ENCODE measurements at regions of chr2 and their contacts with region 1.

Region 1: DNA sequence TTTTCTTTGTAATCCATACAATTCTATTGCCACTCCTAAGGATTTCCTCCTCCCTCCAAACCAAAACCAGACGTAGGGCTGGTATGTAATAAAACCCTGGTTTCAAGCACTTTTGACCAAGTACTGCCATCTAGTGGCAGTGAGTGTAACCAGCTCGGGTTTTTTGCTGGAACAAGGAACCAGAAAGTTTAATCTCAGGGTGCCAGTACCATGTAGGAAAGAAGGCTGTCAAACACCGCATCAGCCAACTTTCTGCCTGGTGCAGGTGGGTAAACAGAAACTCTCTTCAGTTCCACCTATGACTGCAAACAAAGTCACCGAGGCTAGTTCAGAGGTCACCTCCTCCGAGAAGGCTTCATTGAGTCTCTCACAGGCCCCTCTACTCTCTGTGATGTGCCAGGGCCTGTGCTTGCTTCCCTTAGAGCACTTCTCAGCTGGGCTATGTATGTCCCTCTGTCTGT is 10.2 kb upstream of the THNSL2 start:
- DNase-seq: no peak
- H3K4me3 ChIP-seq: no peak overlapping the region
- H3K27ac ChIP-seq: no peak overlapping the region
- H3K4me1 ChIP-seq: no peaks in the 10 kb centered on the region
- H3K27me3 ChIP-seq: no peaks in the 10 kb centered on the region
- CTCF ChIP-seq: peak; percentile 48 to 83 (median 70)

Region 2: DNA sequence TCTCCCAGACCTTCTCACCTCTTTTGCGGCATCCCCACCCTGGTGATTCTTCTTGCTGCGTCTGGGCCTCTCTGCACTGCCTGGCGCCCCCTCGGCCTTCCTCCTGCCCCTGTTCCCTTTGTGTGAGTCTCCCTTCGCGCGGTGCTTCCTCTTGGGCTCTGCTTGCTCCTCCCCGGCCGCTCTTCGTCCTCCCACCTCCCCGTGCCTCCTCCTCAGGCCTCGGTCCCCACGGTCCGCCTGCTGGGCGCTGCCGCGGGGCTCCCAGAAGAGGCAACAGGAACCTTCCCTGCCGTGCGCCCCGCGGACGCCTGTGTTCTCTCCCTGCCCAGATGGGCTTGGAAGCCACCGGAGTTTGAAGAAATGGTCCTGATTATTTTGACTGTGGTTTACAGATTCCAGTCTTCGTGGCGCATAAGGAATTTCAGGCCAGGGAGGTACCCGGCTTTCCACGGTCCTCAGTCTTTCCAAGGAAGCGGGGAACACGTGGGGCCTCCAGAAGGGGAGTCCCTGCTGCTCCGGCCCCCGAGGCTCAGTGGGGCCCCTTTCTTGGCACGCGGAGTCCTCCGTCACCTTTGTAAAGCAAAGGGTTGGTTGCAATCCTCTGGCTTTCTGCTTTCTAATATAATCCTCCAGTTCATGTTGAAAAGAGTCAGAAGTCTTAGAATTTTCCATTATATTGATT is 156.8 kb before region 1 on chr2:
- intact Hi-C with region 1: loop called (anchors 10 kb)
- DNase-seq: no peak
- H3K4me3 ChIP-seq: no peak overlapping the region
- H3K27ac ChIP-seq: no peak overlapping the region
- H3K4me1 ChIP-seq: no peaks in the 10 kb centered on the region
- H3K27me3 ChIP-seq: no peaks in the 10 kb centered on the region
- CTCF ChIP-seq: no peak

Measured in ascending aorta (tissue), 2 donors.